Sigmoid colon (tissue), 7 donors: ENCODE measurements at regions of chr2 and their contacts with region 1.

Region 1: GRCh38 chr2:161780881-161781280 is 156.7 kb downstream of the SLC4A10 start:
- DNase-seq: no peak
- H3K4me3 ChIP-seq: no peak overlapping the region
- H3K27ac ChIP-seq: no peak overlapping the region
- H3K4me1 ChIP-seq: no peaks in the 10 kb centered on the region
- H3K27me3 ChIP-seq: no peaks in the 10 kb centered on the region
- CTCF ChIP-seq: no peak
- EP300 ChIP-seq: no peak
- POLR2A ChIP-seq: no peak

Region 2: DNA sequence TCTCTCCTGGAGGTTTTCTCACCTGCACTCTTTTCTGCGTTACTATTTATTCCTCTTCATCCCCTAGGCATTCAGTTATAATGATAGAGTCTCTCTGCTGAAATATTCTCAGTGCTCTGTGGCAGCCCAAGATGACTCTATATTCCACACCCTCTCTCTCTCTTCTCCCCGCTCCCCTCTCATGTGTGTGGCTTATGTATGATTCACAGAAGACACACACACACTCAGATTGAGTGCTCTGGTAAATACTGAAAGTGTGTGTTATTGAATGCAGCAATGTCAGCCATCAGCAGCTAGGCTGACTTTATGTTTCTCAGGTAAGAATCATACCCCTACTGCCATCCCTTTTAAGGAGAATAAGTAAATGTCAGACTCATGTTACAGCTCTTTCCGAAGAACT is 44.5 kb after region 1 on chr2:
- intact Hi-C with region 1: loop called (anchors 2 kb)
- DNase-seq: no peak
- H3K4me3 ChIP-seq: no peak overlapping the region
- H3K27ac ChIP-seq: no peak overlapping the region
- H3K4me1 ChIP-seq: no peaks in the 10 kb centered on the region
- H3K27me3 ChIP-seq: no peaks in the 10 kb centered on the region
- CTCF ChIP-seq: no peak
- EP300 ChIP-seq: no peak
- POLR2A ChIP-seq: no peak

Region 3: GRCh38 chr2:161975062-161975812 is 194.4 kb after region 1 on chr2:
- intact Hi-C with region 1: no loop called
- DNase-seq: no peak
- H3K4me3 ChIP-seq: no peak overlapping the region
- H3K27ac ChIP-seq: no peak overlapping the region
- H3K4me1 ChIP-seq: no peaks in the 10 kb centered on the region
- H3K27me3 ChIP-seq: no peaks in the 10 kb centered on the region
- CTCF ChIP-seq: no peak
- EP300 ChIP-seq: no peak
- POLR2A ChIP-seq: no peak